ENCODE measurements at regions of chr4 and their contacts with region 1.

Region 1: GRCh38 chr4:62285026-62285425 is 1084.9 kb downstream of the ADGRL3 start:
- DNase-seq: no peak
- ATAC-seq: no peak
- H3K4me3 ChIP-seq: no peak overlapping the region
- H3K27ac ChIP-seq: no peak overlapping the region
- H3K4me1 ChIP-seq: no peaks in the 10 kb centered on the region
- H3K27me3 ChIP-seq: no peaks in the 10 kb centered on the region
- CTCF ChIP-seq: no peak

Region 2: GRCh38 chr4:61741327-61742096 is 543.5 kb before region 1 on chr4:
- CTCF ChIA-PET with region 1: no interaction called
- POLR2A ChIA-PET with region 1: no interaction called
- intact Hi-C with region 1: no loop called
- DNase-seq: peak; percentile 75
- ATAC-seq: peak; percentile 81
- H3K4me3 ChIP-seq: no peak overlapping the region
- H3K27ac ChIP-seq: no peak overlapping the region
- H3K4me1 ChIP-seq: no peaks in the 10 kb centered on the region
- H3K27me3 ChIP-seq: no peaks in the 10 kb centered on the region
- CTCF ChIP-seq: peak; percentile 93

Region 3: GRCh38 chr4:62474802-62475201 is 189.8 kb after region 1 on chr4:
- CTCF ChIA-PET with region 1: interaction called, 14 read pairs
- POLR2A ChIA-PET with region 1: no interaction called
- intact Hi-C with region 1: no loop called
- DNase-seq: peak; percentile 39
- ATAC-seq: peak; percentile 67
- H3K4me3 ChIP-seq: no peak overlapping the region
- H3K27ac ChIP-seq: no peak overlapping the region
- H3K4me1 ChIP-seq: no peaks in the 10 kb centered on the region
- H3K27me3 ChIP-seq: no peaks in the 10 kb centered on the region
- CTCF ChIP-seq: no peak

Measured in PC-3 (cell line).